ENCODE measurements at regions of chr17 and their contacts with region 1.

Region 1: GRCh38 chr17:5226940-5227878 is 7.5 kb downstream of the SCIMP start:
- DNase-seq: peak; percentile 61
- CTCF ChIP-seq: no peak

Region 2: GRCh38 chr17:5155495-5155894 is 71.7 kb before region 1 on chr17:
- CTCF ChIA-PET with region 1: no interaction called
- POLR2A ChIA-PET with region 1: no interaction called
- DNase-seq: no peak
- CTCF ChIP-seq: no peak

Region 3: DNA sequence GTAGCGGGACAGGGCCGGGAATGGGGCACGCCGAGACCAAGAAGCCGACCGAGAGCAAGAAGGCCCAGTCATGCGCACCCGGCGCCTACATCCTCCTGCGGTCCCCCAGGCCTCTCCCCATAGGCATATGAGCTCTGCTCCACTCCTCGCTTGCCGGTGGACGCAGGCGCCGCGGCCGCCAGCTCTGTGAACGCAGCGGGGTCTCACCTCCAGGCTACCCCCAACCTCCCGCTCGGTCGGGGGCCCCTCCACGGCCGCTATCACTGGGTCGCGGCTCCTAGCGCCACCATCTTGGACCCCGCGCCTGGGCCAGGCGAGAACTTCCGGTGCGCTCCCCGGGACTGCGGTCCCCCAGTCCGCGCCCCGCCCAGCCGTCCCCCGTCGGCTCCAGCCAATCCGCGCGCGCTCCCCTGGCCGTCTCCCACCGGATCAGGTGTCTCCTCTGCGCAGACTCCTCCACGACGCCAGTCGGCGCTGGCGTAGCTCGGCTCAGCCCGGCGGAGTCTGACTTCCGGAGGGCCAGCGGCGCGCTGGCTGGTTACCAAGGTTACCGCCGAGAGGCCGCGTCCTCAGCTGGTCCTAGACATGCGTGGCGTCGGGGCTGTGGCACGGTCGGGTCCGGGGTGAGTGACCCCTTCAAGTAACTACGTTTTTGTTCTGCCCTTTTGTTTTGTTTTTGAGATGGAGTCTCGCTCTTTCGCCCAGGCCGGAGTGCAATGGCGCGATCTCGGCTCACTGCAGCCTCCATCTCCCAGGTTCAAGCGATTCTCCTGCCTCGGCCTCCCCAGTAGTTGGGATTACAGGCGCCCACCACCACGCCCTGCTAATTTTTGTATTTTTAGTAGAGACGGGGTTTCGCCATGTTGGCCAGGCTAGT is 35.4 kb before region 1 on chr17 and contains the start of gene ZNF594:
- CTCF ChIA-PET with region 1: interaction called, 37 read pairs
- POLR2A ChIA-PET with region 1: interaction called, 4 read pairs
- DNase-seq: peak; percentile 99
- CTCF ChIP-seq: peak; percentile 85

Region 4: GRCh38 chr17:5198472-5198871 is 28.7 kb before region 1 on chr17:
- CTCF ChIA-PET with region 1: interaction called, 37 read pairs
- POLR2A ChIA-PET with region 1: interaction called, 4 read pairs
- DNase-seq: no peak
- CTCF ChIP-seq: no peak

Region 5: DNA sequence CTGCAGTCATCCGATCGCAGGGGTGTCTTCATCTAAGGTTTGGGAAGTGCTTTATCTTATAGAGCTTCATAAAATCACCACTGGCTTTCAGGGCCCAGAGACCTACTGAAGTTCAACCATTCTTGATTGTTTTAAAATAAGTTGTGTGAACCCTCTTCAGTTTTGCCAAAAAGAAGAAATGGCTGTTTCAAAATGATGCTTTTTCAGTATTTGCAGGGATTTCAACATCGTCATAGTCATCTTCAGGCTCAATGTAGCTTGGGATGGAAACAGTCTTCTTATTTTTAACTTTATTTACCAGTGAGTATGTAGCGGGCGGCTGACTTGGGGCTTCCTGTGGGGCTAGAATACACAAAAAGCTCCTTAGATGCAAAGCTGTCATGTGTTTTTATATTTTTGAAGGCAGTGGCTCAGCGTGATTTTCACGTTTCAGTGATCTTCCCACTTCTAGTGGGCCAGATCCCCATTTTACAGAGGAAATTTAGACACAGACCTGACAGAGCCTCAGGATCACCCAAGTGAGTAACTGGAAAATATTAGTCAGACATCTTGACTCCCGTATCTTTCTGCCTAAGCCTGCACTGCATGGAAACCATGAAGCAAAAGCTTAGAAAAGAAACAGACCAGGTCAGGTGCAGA is 16.5 kb before region 1 on chr17:
- CTCF ChIA-PET with region 1: interaction called, 11 read pairs
- POLR2A ChIA-PET with region 1: interaction called, 10 read pairs
- DNase-seq: peak; percentile 35
- CTCF ChIP-seq: no peak

Region 6: DNA sequence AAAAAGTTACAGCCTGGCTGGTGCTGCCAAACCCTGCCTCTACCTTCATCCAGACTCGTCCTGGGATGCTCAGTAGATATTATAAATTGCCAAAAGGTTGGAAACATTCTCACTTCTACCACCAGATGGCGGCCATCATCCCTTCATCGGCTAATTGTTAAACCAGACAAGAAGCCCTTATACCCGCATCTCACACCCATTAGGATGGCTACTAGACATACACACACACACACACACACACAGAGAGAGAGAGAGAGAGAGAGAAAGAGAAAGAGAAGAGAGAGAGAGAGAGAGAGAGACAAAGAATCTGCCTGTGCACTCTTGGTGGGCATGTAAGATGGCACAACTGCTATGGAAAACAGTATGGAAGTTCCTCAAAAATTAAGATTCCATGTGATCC is 22.4 kb after region 1 on chr17:
- CTCF ChIA-PET with region 1: no interaction called
- POLR2A ChIA-PET with region 1: no interaction called
- DNase-seq: peak; percentile 77
- CTCF ChIP-seq: peak; percentile 66

Region 7: GRCh38 chr17:5260554-5260953 is 33.3 kb after region 1 on chr17:
- CTCF ChIA-PET with region 1: no interaction called
- POLR2A ChIA-PET with region 1: no interaction called
- DNase-seq: peak; percentile 1
- CTCF ChIP-seq: no peak